GM13976 (cell line): ENCODE measurements at regions of chr3 and their contacts with region 1.

Region 1: DNA sequence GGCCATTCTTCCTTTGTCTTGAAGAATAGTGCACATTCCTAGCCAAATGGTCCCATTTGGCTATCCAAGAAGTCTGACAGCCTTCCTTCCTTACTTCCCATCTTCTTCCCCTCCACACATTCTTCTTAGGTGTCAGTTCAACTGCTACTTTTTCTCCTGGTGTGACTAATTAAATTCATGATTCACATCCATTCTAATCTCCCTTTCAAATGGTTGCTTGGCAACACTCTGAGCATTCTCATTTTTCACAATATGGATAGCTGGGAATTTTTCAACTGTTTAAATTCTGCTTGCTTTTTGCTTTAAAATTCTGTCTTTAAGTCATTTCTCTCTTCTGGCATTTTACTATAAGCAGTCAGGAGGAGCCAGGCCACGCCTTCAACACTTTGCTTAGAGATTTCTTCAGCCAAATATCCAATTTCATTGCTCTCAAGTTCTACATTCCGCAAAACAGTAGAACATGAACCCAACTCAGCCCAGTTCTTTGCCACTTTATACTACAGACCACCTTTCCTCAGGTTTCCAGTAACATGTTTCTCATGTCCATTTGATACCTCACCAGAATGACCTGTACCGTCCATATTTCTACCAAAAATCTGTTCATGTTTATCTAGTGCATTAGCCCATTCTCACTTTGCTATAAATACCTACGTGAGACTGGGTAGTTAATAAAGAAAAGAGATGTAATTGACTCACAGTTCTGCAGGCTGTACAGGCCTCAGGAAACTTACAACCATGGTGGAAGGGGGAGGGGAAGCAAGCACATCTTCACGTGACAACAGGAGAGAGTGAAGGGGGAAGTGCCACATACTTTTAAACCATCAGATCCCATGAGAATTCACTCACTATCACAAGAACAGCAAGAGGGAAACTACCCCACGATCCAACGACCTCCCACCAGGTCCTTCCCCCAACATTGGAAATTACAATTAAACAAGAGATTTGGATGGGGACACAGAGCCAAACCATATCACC is 31.9 kb upstream of the MCF2L2 start:
- DNase-seq: no peak
- CTCF ChIP-seq: no peak

Region 2: GRCh38 chr3:183766745-183767606 is 306.6 kb after region 1 on chr3:
- in situ Hi-C with region 1: loop called (anchors 10 kb)
- DNase-seq: peak; percentile 71
- CTCF ChIP-seq: peak; percentile 64